ENCODE measurements at regions of chr3 and their contacts with region 1.

Region 1: GRCh38 chr3:16004812-16005211 is 169.7 kb upstream of the GALNT15 start:
- DNase-seq: no peak
- ATAC-seq: no peak
- H3K4me3 ChIP-seq: no peak overlapping the region
- H3K27ac ChIP-seq: no peak overlapping the region
- H3K4me1 ChIP-seq: no peaks in the 10 kb centered on the region
- H3K27me3 ChIP-seq: no peaks in the 10 kb centered on the region
- CTCF ChIP-seq: no peak
- POLR2A ChIP-seq: no peak
- RAD21 ChIP-seq: no peak

Region 2: DNA sequence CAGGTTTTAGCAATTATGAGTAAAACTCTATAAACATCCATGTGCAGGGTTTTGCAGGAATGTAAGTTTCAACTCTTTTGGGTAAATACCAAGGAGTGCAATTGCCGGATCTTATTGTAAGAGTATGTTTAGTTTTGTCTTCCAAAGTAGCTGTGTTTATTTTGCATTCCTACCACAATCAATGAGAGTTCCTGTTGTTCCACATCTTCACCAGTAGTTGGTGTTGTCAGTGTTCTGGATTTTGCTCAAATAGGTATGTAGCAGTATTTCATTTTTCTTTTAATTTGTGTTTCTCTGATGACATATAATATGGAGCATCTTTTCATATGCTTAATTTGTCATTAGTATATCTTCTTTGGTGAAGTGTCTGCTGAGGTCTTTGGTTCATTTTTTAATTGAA is 15.4 kb before region 1 on chr3:
- CTCF ChIA-PET with region 1: no interaction called
- POLR2A ChIA-PET with region 1: no interaction called
- dilution Hi-C with region 1: no loop called
- in situ Hi-C with region 1: no loop called
- intact Hi-C with region 1: loop called (anchors 2 kb)
- DNase-seq: peak; percentile 64
- ATAC-seq: peak; percentile 85
- H3K4me3 ChIP-seq: no peak overlapping the region
- H3K27ac ChIP-seq: no peak overlapping the region
- H3K4me1 ChIP-seq: no peaks in the 10 kb centered on the region
- H3K27me3 ChIP-seq: no peaks in the 10 kb centered on the region
- CTCF ChIP-seq: peak; percentile 41
- POLR2A ChIP-seq: no peak
- RAD21 ChIP-seq: 0 out of 2 replicates have a peak, but pooled peaks have one; percentile 23

Region 3: DNA sequence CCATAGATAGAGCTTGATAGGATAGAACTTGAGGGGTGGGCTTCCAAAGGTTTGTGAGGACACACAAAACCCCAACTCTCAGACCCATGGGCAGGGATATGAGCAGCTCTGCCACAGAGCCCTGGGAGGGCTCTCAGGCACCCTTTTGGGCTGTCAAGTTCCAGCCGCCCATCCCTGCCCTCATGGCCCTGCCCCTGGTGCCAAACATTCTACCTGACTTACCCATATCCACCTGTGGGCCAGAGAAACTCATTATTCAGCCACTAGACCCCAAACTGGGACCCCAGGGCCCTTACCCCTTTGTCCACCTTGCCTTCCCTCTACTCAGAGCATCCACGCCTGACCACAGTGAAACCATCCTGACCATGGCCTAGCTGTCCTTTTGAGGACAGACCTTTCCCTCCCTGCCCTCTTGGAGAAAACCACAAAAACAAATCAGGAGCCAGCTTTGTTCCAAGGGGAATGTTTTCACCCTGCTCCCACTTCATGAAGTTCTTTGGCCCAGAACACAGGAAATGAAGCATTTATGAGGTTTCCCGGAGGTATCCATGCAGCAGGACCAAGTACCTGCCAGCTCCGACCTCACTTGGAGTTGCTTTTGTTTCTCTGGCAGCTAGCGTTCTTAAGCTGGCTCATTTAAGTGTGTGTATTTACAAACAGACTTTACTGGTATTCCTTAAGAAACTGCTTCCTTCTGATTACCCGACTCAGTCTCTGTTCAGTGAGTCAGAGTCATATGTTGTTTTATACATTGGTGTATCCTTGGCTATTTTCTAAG is 135.5 kb after region 1 on chr3:
- CTCF ChIA-PET with region 1: no interaction called
- POLR2A ChIA-PET with region 1: no interaction called
- dilution Hi-C with region 1: no loop called
- in situ Hi-C with region 1: no loop called
- intact Hi-C with region 1: no loop called
- DNase-seq: peak; percentile 88
- ATAC-seq: peak; percentile 80
- H3K4me3 ChIP-seq: no peak overlapping the region
- H3K27ac ChIP-seq: peak overlapping the region; percentile 78
- H3K4me1 ChIP-seq: peaks cover 16% of the 10 kb centered on the region
- H3K27me3 ChIP-seq: no peaks in the 10 kb centered on the region
- CTCF ChIP-seq: no peak
- POLR2A ChIP-seq: no peak
- RAD21 ChIP-seq: no peak